CD14-positive monocyte (primary cell): ENCODE measurements at regions of chr2 and their contacts with region 1.

Region 1: GRCh38 chr2:65107530-65107929 is 22.4 kb downstream of the RAB1A start:
- DNase-seq: no peak
- H3K4me3 ChIP-seq: no peak overlapping the region
- H3K4me3 Mint-ChIP-seq: no peak overlapping the region
- H3K27ac ChIP-seq: peak overlapping the region in 1 of 2 donors; percentile 14
- H3K27ac Mint-ChIP-seq: peak overlapping the region in 2 of 7 donors; percentile 20 to 62
- H3K4me1 ChIP-seq: peaks cover 9 to 12% of the 10 kb centered on the region in 2 donors
- H3K4me1 Mint-ChIP-seq: peaks cover 14% of the 10 kb centered on the region
- H3K27me3 ChIP-seq: no peaks in the 10 kb centered on the region
- H3K27me3 Mint-ChIP-seq: no peaks in the 10 kb centered on the region
- CTCF ChIP-seq: no peak

Region 2: GRCh38 chr2:65024149-65024829 is 83.2 kb before region 1 on chr2:
- intact Hi-C with region 1: no loop called
- DNase-seq: no peak
- H3K4me3 ChIP-seq: no peak overlapping the region
- H3K4me3 Mint-ChIP-seq: no peak overlapping the region
- H3K27ac ChIP-seq: no peak overlapping the region
- H3K27ac Mint-ChIP-seq: peak overlapping the region in 3 of 7 donors; percentile 40 to 69 (median 62)
- H3K4me1 ChIP-seq: peaks cover 39 to 44% of the 10 kb centered on the region in 2 donors
- H3K4me1 Mint-ChIP-seq: peaks cover 45% of the 10 kb centered on the region
- H3K27me3 ChIP-seq: no peaks in the 10 kb centered on the region
- H3K27me3 Mint-ChIP-seq: no peaks in the 10 kb centered on the region
- CTCF ChIP-seq: no peak

Region 3: DNA sequence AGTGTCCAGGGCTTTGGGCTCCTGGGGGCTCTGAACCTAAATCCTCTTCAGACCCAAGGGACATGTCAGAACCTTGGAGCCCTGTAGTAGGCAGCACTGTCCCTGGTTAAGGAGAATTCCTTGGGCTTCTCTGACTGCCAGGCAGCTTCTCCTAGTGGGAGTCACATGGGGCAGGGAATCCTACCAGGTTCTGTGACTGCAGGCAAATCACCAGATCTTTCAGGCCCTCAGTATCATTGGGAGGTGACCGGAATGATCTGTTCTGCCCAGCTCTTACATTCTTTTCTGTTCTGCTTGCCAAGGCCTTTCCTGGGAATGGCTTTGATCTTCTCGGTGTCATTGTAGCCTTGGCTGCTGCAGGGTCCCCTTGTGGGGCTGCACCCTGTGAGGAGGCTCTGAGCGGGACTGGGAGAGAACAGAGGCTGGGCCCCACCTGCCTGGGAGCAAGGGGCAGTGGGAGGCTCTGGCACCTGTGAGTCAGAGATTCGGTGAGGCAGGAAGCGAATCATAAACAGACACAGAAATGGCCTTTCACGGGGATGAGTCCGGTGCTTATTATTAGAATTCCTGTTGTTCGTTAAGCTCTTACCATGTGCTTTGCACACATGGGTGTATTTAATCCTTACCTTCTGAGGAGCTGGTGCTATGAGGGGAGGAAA is 37.2 kb before region 1 on chr2:
- intact Hi-C with region 1: loop called in 1 of 2 experiments (anchors 5 kb)
- DNase-seq: peak in 1 of 3 donors; percentile 27
- H3K4me3 ChIP-seq: no peak overlapping the region
- H3K4me3 Mint-ChIP-seq: no peak overlapping the region
- H3K27ac ChIP-seq: peak overlapping the region; percentile 26 to 67
- H3K27ac Mint-ChIP-seq: peak overlapping the region in 6 of 7 donors; percentile 21 to 86 (median 50)
- H3K4me1 ChIP-seq: peaks cover 24 to 26% of the 10 kb centered on the region in 2 donors
- H3K4me1 Mint-ChIP-seq: peaks cover 38% of the 10 kb centered on the region
- H3K27me3 ChIP-seq: no peaks in the 10 kb centered on the region
- H3K27me3 Mint-ChIP-seq: no peaks in the 10 kb centered on the region
- CTCF ChIP-seq: no peak

Region 4: GRCh38 chr2:65092791-65093190 is 14.7 kb before region 1 on chr2:
- intact Hi-C with region 1: no loop called
- DNase-seq: no peak
- H3K4me3 ChIP-seq: no peak overlapping the region
- H3K4me3 Mint-ChIP-seq: no peak overlapping the region
- H3K27ac ChIP-seq: peak overlapping the region in 1 of 2 donors; percentile 44
- H3K27ac Mint-ChIP-seq: peak overlapping the region in 4 of 7 donors; percentile 1 to 61 (median 56)
- H3K4me1 ChIP-seq: no peaks in the 10 kb centered on the region
- H3K4me1 Mint-ChIP-seq: peaks cover 3% of the 10 kb centered on the region
- H3K27me3 ChIP-seq: no peaks in the 10 kb centered on the region
- H3K27me3 Mint-ChIP-seq: no peaks in the 10 kb centered on the region
- CTCF ChIP-seq: no peak